ENCODE measurements at regions of chr14 and their contacts with region 1.

Region 1: DNA sequence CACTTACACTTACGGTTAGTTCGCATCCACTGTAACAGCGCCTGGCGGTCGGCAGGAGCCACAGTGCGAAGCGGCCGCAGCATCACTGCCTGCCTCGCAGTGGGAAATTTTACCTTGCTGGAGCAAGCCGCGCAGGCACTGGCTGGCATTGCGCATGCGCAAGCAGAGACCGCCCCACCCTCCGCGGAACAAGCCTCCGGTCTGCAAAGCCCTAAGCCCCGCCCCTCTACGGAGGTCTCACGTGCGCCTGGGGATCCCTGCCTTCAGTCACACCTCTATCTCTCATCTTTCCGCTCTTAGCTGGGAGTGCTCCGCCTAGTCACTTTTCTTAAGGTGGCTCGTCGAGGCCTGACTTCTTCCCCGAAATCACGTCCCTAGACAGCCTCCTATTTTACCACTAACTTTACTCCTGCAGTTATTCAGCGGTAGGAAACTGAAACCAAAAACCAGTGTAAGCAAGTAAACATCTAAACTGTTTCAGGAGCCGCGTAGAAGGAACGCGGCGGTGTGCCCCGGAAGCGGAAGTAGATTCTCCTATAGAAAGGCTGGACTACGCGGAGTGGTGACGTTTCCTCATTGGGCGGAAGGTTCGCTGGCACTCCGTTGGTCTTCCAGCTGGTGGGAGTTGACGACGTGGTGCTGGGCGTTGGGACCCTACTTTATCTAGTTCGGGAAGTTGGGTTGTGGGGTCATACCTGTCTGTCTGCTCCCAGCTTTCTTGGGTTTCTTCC is at the start of gene SRP54:
- DNase-seq: peak; percentile 99
- ATAC-seq: peak; percentile 86
- H3K4me3 Mint-ChIP-seq: no peak within 1 kb of the TSS
- H3K27ac Mint-ChIP-seq: no peak within 1 kb of the TSS
- H3K4me1 Mint-ChIP-seq: peaks cover 30% of the 10 kb centered on the region
- H3K27me3 Mint-ChIP-seq: no peaks in the 10 kb centered on the region
- total RNA-seq, gene SRP54: 60.2 to 61.5 TPM

Region 2: DNA sequence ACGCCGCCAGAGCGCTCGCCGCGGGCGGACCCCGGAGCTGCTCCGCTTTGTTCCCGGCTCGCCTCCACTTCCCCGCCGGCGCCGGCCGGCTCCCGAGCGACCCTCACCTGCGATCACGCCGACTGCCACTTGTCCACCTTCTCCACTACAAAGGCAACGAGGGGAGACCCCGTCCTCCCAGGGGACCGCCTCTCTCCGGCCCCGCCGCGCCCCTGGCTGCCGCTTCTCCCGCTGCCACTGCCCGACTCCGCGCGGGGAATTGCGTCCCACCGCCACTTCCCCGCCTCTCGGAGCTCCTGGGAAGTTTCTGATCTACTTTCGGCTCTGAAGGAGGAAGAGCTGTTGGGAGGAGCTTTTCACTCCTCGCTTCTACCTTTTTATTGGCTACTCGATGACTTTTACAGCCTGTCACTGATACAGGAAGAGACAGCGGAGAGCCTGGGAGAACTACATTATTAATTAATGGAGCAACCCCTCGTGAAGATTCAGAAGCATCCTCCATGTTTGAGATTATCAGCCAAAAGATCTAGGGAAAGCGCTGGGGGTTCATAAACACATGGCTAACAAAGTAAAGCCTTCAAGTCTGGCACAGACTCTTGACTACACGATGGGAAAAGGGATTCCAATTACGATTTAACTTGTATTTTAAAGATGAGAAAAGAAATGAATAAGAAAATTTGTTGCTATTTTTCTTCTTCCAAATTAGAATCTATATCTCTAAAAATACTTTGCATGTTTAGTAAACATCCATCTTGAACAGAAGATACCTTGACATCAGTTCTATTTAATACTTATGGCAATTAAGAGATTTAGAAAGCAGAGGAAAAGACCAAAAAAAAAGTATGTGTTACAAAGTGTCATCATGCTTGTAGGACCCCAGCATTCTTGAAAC is 107.3 kb before region 1 on chr14 and contains the start of gene BAZ1A:
- POLR2A ChIA-PET with region 1: interaction called, 60 read pairs
- DNase-seq: peak; percentile 71
- ATAC-seq: peak; percentile 20
- H3K4me3 Mint-ChIP-seq: peak within 1 kb of the TSS; percentile 99
- H3K27ac Mint-ChIP-seq: peak within 1 kb of the TSS; percentile 99
- H3K4me1 Mint-ChIP-seq: peaks cover 29% of the 10 kb centered on the region
- H3K27me3 Mint-ChIP-seq: no peaks in the 10 kb centered on the region
- total RNA-seq, gene BAZ1A: 46.1 to 51.8 TPM

Region 3: GRCh38 chr14:34931206-34931605 is 51.4 kb before region 1 on chr14:
- POLR2A ChIA-PET with region 1: interaction called, 11 read pairs
- DNase-seq: no peak
- ATAC-seq: peak; percentile 76
- H3K4me3 Mint-ChIP-seq: peak overlapping the region; percentile 76
- H3K27ac Mint-ChIP-seq: peak overlapping the region; percentile 93
- H3K4me1 Mint-ChIP-seq: peaks cover 25% of the 10 kb centered on the region
- H3K27me3 Mint-ChIP-seq: no peaks in the 10 kb centered on the region

Region 4: GRCh38 chr14:35046048-35046741 is 63.6 kb after region 1 on chr14 and contains the start of gene FAM177A1:
- POLR2A ChIA-PET with region 1: interaction called, 47 read pairs
- DNase-seq: peak; percentile 95
- ATAC-seq: peak; percentile 95
- H3K4me3 Mint-ChIP-seq: peak within 1 kb of the TSS; percentile 89
- H3K27ac Mint-ChIP-seq: peak within 1 kb of the TSS; percentile 98
- H3K4me1 Mint-ChIP-seq: peaks cover 31% of the 10 kb centered on the region
- H3K27me3 Mint-ChIP-seq: no peaks in the 10 kb centered on the region
- total RNA-seq, gene FAM177A1: 36.5 to 42.5 TPM

Region 5: DNA sequence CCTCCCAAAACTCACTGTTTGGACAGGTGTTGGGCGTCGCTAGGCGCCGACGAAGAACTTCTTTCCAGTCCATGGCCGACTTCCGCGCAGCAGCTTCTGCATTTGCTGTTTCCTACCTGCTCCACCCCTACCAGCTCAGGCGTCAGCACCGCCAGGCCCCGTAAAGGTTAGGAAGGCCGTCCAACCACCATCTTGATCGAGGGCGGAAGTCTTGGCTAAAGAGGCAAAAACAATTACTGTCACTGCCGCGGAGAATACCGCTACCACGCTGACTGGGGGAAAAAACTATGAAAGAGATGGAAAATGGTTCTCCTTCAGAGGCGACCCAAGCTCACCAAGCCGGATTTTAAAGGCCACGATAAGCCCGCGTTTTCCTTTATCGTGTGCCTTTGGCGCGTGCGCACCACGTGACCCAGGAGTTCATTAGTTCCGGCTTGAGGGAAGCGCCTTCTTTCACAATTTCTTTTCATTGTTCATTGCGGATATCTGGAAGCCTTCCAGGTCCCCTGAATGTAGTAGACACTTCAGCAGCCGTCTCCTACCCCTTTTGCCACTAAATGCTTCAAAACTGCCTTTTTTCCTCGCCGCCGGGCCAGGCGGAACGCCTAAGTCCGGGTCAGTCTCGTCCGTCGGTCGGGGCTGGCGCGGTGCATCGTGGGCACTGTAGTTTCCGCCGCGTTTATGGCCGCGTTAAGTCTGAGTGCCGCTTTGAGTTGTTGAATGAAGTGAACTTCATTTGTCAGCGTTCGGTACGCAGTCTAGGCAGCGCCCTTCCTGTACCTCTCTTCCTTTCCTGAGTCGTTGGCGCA is 139.5 kb after region 1 on chr14 and contains the starts of genes PPP2R3C and PRORP:
- POLR2A ChIA-PET with region 1: interaction called, 20 read pairs
- DNase-seq: peak; percentile 86
- ATAC-seq: peak; percentile 91
- H3K4me3 Mint-ChIP-seq: peak within 1 kb of the TSS; percentile 96
- H3K27ac Mint-ChIP-seq: peak within 1 kb of the TSS; percentile 99
- H3K4me1 Mint-ChIP-seq: peaks cover 40% of the 10 kb centered on the region
- H3K27me3 Mint-ChIP-seq: no peaks in the 10 kb centered on the region
- total RNA-seq, gene PPP2R3C: 34.0 to 39.1 TPM
- total RNA-seq, gene PRORP: 27.8 to 30.2 TPM